Spleen (tissue), 13 donors: ENCODE measurements at regions of chr1 and their contacts with region 1.

Region 1: DNA sequence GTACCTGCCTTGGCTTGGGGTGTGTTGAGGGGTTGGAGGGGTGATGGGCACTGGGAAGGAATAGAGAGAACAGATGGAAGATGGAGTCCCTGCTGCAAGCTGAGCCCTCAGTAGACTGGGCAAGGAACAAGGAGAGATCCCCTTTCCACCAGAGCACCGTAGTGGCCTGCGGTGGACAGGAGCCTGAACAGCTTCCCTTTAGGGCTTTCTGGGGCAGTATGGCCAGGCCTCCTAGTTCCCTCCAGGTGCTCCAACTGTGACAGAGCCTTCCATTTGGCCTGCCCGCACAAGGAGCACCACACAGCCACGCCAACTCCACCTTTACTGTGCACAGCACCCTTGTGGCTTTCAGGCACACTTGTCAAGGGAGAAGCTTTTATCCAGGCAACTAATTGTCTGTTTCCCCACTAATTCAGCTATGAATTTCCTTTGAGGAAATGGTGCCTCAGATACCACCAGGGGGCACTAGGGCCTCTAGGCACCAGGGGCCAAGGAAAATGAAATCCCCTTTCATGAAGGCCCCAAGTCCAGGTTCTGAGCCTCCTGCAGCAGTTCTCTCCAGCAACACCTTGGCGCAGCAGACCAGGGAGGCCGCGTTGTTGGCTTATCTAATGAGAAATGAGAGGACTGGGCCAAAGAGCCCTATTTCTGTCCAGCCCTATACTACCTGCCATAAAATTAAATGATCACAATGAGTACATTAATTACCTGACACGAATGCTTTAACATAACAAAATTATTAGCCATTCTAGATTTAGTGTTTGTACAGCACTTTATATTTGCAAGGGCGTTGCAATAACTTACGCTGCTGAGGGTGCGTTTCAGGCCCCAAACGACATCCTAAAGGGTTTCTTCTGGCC is 23.1 kb upstream of the ERI3 start:
- DNase-seq: no peak
- H3K4me3 ChIP-seq: no peak overlapping the region
- H3K27ac ChIP-seq: no peak overlapping the region
- H3K4me1 ChIP-seq: no peaks in the 10 kb centered on the region
- H3K27me3 ChIP-seq: peaks cover 0 to 4% (median 0%) of the 10 kb centered on the region in 7 donors
- CTCF ChIP-seq: peak in 10 of 11 experiments; percentile 42 to 79 (median 66)
- POLR2A ChIP-seq: no peak

Region 2: DNA sequence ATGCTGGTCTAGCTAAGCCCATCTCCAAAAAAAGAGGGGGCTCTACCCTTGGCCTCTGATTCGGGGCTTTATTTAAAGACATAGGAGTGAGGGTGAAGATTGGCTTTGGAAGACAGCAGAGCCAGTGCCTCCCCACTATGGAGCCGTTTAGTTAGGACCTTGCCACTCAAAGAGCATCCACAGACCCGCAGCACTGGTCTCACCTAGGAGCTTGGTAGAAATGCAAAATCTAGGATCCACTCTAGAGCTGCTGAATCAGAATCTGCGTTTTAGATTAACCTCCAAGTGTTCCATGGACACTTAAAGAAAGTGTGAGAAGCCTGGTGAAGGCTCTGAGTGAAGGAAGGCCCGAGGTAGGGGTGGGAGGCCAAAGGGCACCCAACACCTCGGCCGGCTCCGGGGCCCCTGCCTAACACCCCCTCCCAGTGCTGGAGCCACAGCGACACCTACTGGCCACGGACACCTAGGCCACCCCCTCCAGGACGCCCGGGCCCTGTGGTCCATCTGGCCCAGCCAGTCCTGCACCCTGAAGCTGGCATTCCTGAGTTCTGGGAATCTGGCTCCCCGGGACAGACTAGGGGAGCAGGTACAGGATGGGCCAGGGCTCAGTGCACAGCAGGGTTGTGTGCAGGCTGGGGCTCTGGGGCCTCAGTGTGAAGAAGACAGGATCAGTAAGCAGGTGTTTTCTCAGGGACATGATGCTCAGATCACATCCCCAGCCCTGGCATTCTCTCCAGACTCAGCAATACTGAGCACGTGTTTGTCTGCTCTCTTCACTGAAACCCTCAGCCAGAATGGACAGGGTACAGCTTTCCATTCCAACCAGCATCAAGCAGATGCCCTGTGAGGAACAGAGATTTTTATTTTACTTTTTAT is 217.0 kb after region 1 on chr1:
- intact Hi-C with region 1: loop called (anchors 5 kb)
- DNase-seq: peak; percentile 94
- H3K4me3 ChIP-seq: no peak overlapping the region
- H3K27ac ChIP-seq: no peak overlapping the region
- H3K4me1 ChIP-seq: peaks cover 0 to 5% (median 4%) of the 10 kb centered on the region in 6 donors
- H3K27me3 ChIP-seq: peaks cover 0 to 30% (median 0%) of the 10 kb centered on the region in 7 donors
- CTCF ChIP-seq: peak; percentile 76 to 98 (median 95)
- POLR2A ChIP-seq: no peak

Region 3: DNA sequence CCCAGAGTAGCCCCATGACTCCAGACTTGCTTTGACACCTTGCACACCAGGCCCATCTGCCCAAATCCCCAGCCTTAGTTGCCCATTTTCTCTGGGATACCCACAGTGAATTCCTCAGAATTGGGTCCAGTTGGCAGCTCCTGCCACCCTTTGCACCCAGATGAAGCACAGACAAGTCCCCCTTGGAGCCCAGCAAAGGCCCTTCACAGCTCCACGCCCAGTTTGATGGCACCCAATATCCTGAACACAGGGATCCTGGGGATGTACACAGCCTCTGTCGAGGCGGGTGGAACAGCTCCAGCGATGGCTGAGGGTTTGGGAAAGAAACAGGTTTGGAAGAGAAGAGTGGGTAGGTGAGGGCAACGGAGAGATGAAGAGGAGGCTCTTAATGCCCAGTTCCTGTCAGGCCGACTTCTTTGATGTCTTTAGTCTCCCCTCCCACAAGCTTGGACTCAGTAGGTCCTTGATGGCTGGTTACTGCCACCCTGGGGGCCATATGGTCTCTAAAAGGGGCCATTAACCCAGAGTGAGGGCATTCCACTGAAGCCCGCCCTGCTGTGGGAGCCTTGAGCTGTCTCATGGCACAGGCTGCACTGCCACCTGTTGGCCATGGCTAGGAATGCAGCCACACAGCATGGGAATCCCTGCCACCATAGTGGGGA is 274.4 kb after region 1 on chr1:
- intact Hi-C with region 1: loop called (anchors 10 kb)
- DNase-seq: peak; percentile 93
- H3K4me3 ChIP-seq: no peak overlapping the region
- H3K27ac ChIP-seq: peak overlapping the region in 2 of 8 donors; percentile 19 to 31
- H3K4me1 ChIP-seq: peaks cover 0 to 6% (median 0%) of the 10 kb centered on the region in 6 donors
- H3K27me3 ChIP-seq: no peaks in the 10 kb centered on the region
- CTCF ChIP-seq: peak; percentile 81 to 98 (median 95)
- POLR2A ChIP-seq: no peak